Sigmoid colon (tissue), 7 donors: ENCODE measurements at regions of chr17 and their contacts with region 1.

Region 1: GRCh38 chr17:82551779-82552457 is 32.4 kb downstream of the FOXK2 start:
- DNase-seq: peak; percentile 91
- H3K4me3 ChIP-seq: no peak overlapping the region
- H3K27ac ChIP-seq: peak overlapping the region; percentile 47 to 88 (median 83)
- H3K4me1 ChIP-seq: peaks cover 0 to 87% (median 75%) of the 10 kb centered on the region in 4 donors
- H3K27me3 ChIP-seq: no peaks in the 10 kb centered on the region
- CTCF ChIP-seq: peak; percentile 71 to 76 (median 76)
- EP300 ChIP-seq: no peak
- POLR2A ChIP-seq: no peak

Region 2: GRCh38 chr17:82370471-82371332 is 181.2 kb before region 1 on chr17:
- intact Hi-C with region 1: no loop called
- DNase-seq: no peak
- H3K4me3 ChIP-seq: peak overlapping the region in 3 of 4 donors; percentile 18 to 26 (median 24)
- H3K27ac ChIP-seq: no peak overlapping the region
- H3K4me1 ChIP-seq: peaks cover 0 to 21% (median 19%) of the 10 kb centered on the region in 4 donors
- H3K27me3 ChIP-seq: peaks cover 37 to 79% (median 51%) of the 10 kb centered on the region in 3 donors
- CTCF ChIP-seq: no peak
- EP300 ChIP-seq: no peak
- POLR2A ChIP-seq: no peak

Region 3: GRCh38 chr17:82457997-82458864 is 93.7 kb before region 1 on chr17 and contains the start of gene NARF:
- intact Hi-C with region 1: loop called (anchors 2 kb)
- DNase-seq: peak; percentile 100
- H3K4me3 ChIP-seq: peak within 1 kb of the TSS; percentile 77 to 97 (median 80)
- H3K27ac ChIP-seq: peak within 1 kb of the TSS; percentile 99 to 100 (median 100)
- H3K4me1 ChIP-seq: peaks cover 0 to 23% (median 19%) of the 10 kb centered on the region in 4 donors
- H3K27me3 ChIP-seq: no peaks in the 10 kb centered on the region
- CTCF ChIP-seq: no peak
- EP300 ChIP-seq: peak in 1 of 4 donors; percentile 55
- POLR2A ChIP-seq: peak; percentile 95 to 98
- total RNA-seq, gene NARF: 34.6 to 50.4 (median 43.8) TPM